PC-3 (cell line): ENCODE measurements at regions of chr18 and their contacts with region 1.

Region 1: DNA sequence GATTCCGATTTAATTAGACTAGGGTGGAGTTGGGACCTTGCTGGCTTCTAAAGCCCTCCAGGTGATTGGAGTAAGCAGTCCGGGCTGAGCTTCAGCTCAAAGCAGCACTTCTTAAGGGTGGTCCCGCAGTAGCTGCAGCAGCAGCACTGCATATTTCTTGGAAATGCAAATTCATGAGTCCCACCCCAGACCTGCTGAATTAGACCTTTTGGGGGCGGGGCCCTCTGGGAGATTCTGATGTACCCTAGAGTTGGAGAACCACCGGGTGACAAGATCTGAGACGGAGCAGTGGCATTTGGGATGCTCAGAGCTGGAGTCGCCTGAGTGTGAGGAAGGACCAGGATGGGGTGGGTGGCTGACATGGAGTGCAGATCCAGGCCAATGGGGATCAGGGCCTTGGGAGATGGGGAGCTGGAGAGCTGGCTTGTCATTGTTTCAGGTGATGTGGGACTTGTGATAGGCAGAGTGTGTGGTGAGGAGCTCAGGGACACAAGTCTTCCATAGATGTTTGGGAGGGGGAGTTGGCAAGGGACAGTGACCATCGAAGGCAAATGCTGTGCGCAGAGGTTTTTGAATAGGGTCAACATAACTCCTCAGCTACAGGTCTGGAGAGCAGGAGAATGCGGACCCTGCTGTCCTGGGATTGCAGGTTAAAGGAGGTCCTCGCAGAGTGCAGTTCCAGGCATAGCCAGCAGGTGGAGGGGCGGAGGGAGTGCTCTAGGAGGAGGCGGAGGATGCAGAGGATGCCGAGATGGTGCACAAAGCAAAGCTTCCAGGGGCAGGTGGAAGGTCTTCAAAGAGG is 130.9 kb upstream of the RAB12 start:
- DNase-seq: peak; percentile 84
- ATAC-seq: peak; percentile 78
- H3K4me3 ChIP-seq: no peak overlapping the region
- H3K27ac ChIP-seq: no peak overlapping the region
- H3K4me1 ChIP-seq: no peaks in the 10 kb centered on the region
- H3K27me3 ChIP-seq: no peaks in the 10 kb centered on the region
- CTCF ChIP-seq: peak; percentile 84

Region 2: DNA sequence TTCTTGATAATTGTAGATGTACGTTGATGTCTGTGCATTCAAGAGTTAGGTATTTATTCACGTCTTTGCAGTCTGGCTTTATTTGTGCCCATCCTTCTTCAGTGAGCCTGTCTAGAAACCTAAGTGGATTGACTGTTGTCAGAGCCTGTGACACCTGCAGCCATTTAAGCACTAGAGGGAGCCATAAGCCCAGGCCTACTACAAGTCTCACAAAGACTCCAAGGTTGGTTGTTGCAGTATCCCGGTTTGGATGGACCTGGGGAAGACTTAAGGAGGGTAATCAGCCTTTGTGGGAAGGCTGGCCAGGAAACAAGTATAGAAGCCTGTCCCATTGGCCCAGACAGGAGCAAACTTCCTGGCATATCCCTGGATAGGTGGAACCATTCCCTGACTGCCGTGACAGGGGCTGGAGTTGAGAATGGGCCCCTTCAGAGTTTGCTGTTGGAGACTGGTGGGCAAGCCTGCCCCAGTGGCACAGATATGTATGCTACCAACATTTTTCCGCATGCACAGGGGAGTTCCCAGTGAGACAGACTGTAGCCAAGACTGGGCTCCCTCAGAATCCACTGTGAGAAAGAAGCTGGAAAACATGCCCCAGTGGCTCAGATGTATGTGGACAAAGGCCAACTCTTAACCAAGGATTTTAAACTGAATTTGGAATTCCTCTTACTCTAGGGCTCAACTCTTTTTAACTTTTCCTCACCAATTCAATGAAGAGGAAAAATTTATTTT is 1256.8 kb before region 1 on chr18:
- CTCF ChIA-PET with region 1: no interaction called
- POLR2A ChIA-PET with region 1: no interaction called
- intact Hi-C with region 1: loop called (anchors 1 kb)
- DNase-seq: peak; percentile 81
- ATAC-seq: peak; percentile 100
- H3K4me3 ChIP-seq: no peak overlapping the region
- H3K27ac ChIP-seq: no peak overlapping the region
- H3K4me1 ChIP-seq: no peaks in the 10 kb centered on the region
- H3K27me3 ChIP-seq: peaks cover 61% of the 10 kb centered on the region
- CTCF ChIP-seq: peak; percentile 95

Region 3: DNA sequence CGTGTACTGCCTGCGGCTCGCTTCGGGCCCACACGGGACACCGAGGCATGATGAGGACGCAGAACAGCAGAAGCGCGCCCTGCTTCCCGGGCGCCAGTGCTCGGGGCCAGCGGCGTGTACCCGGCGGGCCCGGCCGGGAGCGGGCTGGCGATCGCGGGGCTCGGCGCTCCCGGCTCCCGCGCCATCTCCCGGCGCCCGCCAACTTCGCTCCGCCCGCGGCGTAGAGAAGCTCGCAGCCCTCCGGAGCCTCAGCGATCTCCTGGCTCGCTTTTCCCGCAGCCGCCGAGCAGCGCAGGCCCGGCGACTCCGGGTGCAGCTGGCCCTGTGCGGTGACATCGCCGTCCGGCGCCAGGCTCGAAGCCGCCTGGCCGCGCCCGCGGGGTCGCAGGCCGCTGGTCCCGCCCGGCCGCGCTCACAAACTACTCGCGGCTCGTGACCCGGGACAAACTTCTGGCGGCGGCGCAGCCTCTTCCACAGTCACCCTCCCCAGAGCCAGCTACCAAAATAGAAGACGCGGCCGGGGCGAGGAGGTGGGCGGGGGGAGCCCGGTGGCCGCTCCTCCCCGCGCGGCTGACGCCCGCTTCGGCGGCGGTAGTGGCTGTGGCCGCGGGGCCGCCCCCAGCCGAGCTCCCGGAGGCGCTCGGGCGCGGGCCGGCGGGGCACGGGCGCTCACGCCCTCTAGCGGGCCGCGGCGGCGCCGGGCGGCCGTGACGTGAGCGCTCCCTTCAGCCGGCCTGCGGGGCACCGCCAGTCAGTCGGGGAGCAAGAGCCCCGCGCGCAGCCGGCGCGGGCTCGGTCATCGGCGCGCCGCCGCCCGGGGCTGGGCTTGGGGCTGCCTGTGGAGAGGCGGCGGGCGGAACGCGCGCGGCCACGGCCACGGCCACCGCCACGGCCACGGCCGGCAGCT is 911.5 kb before region 1 on chr18 and contains the start of gene PTPRM:
- CTCF ChIA-PET with region 1: no interaction called
- POLR2A ChIA-PET with region 1: no interaction called
- intact Hi-C with region 1: loop called (anchors 5 kb)
- DNase-seq: peak; percentile 88
- ATAC-seq: peak; percentile 77
- H3K4me3 ChIP-seq: peak within 1 kb of the TSS; percentile 95
- H3K27ac ChIP-seq: peak within 1 kb of the TSS; percentile 33
- H3K4me1 ChIP-seq: peaks cover 33% of the 10 kb centered on the region
- H3K27me3 ChIP-seq: no peaks in the 10 kb centered on the region
- CTCF ChIP-seq: no peak
- total RNA-seq, gene PTPRM: 45.6 and 61.3 TPM in 2 replicates

Region 4: DNA sequence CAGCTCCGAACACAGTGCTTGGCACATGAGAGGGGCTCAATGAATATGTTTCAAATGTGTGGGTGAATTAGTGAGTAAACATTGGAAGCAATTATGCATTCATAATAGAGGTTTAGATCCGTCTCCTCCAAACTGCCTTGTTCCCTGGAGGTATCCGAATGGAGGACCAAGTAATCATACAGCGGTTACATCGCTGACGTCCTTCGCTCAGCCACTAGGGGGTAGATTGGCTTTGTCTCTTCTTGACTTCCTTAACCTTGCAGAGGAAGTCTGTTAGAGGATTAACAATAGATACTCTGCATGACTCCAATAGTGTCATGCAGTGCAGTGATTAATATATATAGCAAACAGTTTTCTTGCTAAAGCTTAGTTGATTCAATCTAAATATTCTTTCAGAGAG is 394.2 kb before region 1 on chr18:
- CTCF ChIA-PET with region 1: interaction called, 3 read pairs
- POLR2A ChIA-PET with region 1: no interaction called
- intact Hi-C with region 1: loop called (anchors 1 kb)
- DNase-seq: peak; percentile 82
- ATAC-seq: peak; percentile 97
- H3K4me3 ChIP-seq: no peak overlapping the region
- H3K27ac ChIP-seq: no peak overlapping the region
- H3K4me1 ChIP-seq: peaks cover 4% of the 10 kb centered on the region; the same call in 1 of the 2 replicates
- H3K27me3 ChIP-seq: no peaks in the 10 kb centered on the region
- CTCF ChIP-seq: peak; percentile 93

Region 5: DNA sequence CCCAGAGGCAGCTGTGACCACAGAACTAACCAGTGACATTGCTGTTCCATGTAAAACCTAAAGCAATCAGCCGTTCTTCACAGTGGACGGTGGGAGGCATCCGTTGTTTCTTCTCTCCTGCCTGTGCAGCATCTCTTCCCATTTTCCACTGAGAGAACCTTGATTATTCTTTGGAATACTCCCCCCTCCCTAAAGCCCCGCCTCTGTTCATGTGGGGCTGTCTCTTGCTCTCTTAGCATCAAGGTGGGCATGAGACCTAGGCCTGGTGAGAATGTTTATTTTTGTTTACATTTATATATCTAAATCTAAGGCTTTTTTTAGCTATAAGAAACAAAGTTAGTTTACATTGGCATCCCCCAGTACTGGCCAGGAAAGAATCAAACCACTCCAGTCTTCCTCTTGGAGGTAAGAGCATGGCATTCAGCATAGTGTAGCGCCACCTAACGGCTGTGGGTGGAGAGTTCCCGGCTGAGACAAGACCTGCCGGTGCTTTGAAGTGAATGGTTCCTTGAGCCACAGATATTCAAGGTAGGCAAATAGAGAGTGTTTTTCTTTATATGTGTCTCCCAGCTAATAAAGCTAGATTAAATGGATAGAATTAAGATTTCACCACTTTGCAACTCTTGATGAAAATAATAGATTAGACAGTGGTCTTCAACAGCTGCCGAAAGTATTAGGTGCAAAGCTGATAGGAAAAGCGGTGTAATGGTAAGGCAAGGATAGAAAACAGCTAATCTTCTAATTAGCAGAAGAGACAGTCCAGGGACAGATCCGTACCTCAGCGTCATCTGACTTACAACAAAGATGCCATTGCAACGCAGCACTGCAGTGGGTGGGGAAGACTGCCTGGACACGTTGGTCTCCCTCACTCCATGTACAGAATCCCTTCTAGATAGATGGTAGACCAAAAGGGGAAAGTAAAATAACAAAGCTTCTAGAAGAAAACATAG is 88.7 kb before region 1 on chr18:
- CTCF ChIA-PET with region 1: no interaction called
- POLR2A ChIA-PET with region 1: interaction called, 3 read pairs
- intact Hi-C with region 1: loop called (anchors 5 kb)
- DNase-seq: peak; percentile 86
- ATAC-seq: peak; percentile 100
- H3K4me3 ChIP-seq: no peak overlapping the region
- H3K27ac ChIP-seq: no peak overlapping the region
- H3K4me1 ChIP-seq: no peaks in the 10 kb centered on the region
- H3K27me3 ChIP-seq: no peaks in the 10 kb centered on the region
- CTCF ChIP-seq: peak; percentile 97

Region 6: DNA sequence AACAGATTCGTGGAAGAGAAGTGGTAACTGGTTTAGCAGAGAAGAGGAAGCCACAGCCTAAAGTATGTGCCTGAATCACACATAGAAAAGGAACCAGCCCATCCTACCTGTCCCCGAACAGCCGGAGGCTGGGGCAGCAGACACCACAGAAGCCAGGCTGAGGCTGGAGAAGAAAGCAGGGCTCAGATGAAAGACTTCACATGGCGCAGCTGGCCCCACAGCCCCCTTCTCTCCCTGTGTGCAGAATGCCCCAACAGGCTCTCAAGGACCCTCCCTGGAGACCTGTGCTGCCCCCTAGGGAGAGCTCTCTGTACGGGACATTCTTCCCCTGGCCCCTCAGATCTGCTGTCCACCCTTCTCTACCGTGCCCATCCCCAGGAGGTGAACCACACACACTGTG is 47.3 kb after region 1 on chr18:
- CTCF ChIA-PET with region 1: no interaction called
- POLR2A ChIA-PET with region 1: no interaction called
- intact Hi-C with region 1: no loop called
- DNase-seq: no peak
- ATAC-seq: peak; percentile 48; the same call in 1 of the 2 replicates
- H3K4me3 ChIP-seq: no peak overlapping the region
- H3K27ac ChIP-seq: no peak overlapping the region
- H3K4me1 ChIP-seq: no peaks in the 10 kb centered on the region
- H3K27me3 ChIP-seq: peaks cover 51% of the 10 kb centered on the region
- CTCF ChIP-seq: peak; percentile 50